ENCODE measurements at regions of chr1 and their contacts with region 1.

Region 1: DNA sequence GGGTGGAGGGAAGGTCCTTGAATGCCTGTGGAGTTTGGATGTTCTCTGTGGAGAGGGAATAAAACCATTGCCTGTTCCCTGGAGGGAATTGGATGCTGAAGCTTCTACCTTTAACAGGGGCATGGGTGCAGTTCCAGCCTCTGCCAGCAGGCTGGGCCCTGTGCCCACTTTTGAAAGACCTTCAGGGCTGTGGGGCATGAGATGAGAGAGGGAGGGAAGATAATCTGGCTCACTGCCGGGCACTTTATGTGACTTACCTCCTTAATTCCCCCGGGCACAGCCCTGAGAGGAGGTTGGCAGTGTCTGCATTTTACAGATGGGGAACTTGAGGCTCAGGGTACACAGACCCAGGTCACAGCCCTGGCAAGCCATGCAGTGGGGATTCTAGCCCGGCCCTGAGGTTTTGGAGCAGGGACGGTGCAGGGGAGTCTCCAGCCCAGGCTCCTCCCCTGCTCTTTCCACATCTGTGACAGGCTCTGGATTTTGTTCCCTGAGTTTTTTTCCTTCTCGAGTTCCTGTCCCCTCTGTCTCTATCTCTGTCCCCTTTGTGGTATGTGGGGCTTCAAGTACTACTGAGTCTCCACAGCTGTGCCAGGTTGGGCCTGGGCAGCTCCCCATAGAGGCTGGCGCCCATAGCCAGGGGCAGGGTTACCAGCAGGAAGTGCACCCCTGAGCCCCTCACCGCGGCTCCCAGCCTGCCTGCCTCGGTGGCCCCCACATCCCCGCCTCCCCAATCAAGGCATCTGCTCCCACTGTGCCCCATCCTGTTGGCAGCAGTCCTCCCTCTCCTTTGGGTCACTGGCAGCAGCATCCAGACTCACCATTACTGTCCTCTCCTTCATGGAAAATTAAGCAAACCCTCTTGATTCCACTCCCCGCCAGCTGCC is 14.0 kb upstream of the THEMIS2 start:
- DNase-seq: peak; percentile 68 to 92 (median 82)
- ATAC-seq: peak; percentile 98
- H3K4me3 Mint-ChIP-seq: peak overlapping the region in 7 of 10 donors; percentile 2 to 68 (median 49)
- H3K27ac Mint-ChIP-seq: peak overlapping the region in 5 of 10 donors; percentile 35 to 78 (median 53)
- H3K4me1 Mint-ChIP-seq: peaks cover 18 to 35% (median 21%) of the 10 kb centered on the region in 4 donors
- H3K27me3 Mint-ChIP-seq: no peaks in the 10 kb centered on the region

Region 2: DNA sequence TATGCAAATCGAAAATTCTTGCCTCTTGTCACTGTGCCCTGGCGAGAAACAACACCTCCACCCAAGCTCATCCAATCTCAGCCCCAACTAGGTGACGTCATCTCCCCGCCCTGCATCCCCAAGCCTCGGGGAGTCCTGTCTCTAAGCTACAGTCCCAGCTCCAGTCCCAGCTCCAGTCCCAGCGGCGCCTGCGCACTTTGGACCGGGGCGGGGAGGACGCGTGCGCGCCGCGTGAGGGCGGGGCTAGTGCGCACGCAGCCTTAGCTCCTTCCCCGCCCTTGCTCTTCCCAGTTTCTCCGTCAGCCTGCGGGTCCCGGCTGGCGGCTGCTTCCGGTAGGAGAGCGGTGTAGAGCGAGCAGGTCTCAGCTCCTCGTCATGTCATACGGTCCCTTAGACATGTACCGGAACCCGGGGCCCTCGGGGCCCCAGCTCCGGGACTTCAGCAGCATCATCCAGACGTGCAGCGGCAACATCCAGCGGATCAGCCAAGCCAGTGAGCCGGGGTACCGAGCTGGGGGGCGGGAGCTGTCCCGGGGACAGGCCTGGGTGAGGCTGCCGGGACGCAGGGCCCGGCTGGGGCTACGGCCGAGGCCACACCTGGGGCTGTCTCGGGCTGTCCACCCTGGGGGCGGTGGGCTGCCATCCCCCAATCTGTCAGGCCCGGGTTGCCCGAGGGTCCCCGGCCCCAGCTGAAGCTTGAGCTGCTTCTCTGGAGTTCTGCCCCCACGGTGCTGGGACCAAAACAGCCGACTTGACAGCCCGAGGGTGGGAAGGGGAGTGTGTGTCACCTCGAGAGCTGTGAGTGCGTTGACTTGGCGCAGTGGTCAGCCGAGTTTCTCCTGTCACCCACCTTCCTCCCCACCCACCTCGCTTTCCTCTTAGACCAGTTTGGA is 85.1 kb before region 1 on chr1 and contains the start of gene STX12:
- POLR2A ChIA-PET with region 1: no interaction called
- DNase-seq: peak; percentile 93 to 99 (median 97)
- ATAC-seq: peak; percentile 93 to 94
- H3K4me3 Mint-ChIP-seq: peak within 1 kb of the TSS; percentile 91 to 98 (median 95)
- H3K27ac Mint-ChIP-seq: peak within 1 kb of the TSS; percentile 91 to 99 (median 96)
- H3K4me1 Mint-ChIP-seq: peaks cover 15 to 36% (median 32%) of the 10 kb centered on the region in 4 donors
- H3K27me3 Mint-ChIP-seq: no peaks in the 10 kb centered on the region
- polyA plus RNA-seq, gene STX12: 9.2 to 12.3 (median 10.6) TPM

Region 3: GRCh38 chr1:27979151-27979858 is 121.0 kb after region 1 on chr1:
- POLR2A ChIA-PET with region 1: interaction called, 13 read pairs
- DNase-seq: peak in 3 of 10 donors; percentile 45 to 63 (median 59)
- ATAC-seq: peak; percentile 70 to 77
- H3K4me3 Mint-ChIP-seq: no peak overlapping the region
- H3K27ac Mint-ChIP-seq: no peak overlapping the region
- H3K4me1 Mint-ChIP-seq: no peaks in the 10 kb centered on the region
- H3K27me3 Mint-ChIP-seq: no peaks in the 10 kb centered on the region

Measured in naive thymus-derived CD8-positive, alpha-beta T cell (primary cell).